Caco-2 (cell line): ENCODE measurements at regions of chr1 and their contacts with region 1.

Region 1: DNA sequence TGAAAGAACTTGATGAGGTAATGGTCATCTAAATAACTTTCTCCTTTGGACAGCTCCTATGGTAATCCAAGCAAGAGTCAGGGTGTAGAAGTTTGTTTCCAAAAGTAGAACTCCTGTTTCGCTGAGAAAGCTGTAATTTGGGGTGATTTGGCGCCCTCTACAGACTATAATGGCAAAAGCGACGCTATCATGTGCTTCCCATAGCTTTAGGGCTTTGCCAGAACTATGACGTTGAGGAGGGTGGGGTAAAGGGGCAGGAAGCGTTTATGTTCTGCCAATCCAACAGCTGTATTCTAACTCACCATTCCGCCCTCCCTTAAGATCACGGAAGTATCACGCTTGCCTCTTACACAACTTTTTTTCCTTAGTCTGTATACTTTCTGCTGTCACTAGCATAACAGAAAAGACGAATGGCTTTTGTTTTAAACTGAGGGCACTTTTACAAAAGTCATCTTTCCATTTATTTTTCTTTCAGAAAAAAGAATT is at the start of gene FMO4:
- DNase-seq: peak; percentile 91 to 95
- H3K4me3 ChIP-seq: peak within 1 kb of the TSS; percentile 21
- H3K4me3 Mint-ChIP-seq: peak within 1 kb of the TSS; percentile 67
- H3K27ac Mint-ChIP-seq: peak within 1 kb of the TSS; percentile 74
- H3K4me1 ChIP-seq: peaks cover 9% of the 10 kb centered on the region
- H3K4me1 Mint-ChIP-seq: no peaks in the 10 kb centered on the region
- H3K27me3 ChIP-seq: no peaks in the 10 kb centered on the region
- H3K27me3 Mint-ChIP-seq: no peaks in the 10 kb centered on the region
- CTCF ChIP-seq: peak; percentile 79 to 80
- total RNA-seq, gene FMO4: 2.3 and 3.8 TPM in 2 replicates

Region 2: DNA sequence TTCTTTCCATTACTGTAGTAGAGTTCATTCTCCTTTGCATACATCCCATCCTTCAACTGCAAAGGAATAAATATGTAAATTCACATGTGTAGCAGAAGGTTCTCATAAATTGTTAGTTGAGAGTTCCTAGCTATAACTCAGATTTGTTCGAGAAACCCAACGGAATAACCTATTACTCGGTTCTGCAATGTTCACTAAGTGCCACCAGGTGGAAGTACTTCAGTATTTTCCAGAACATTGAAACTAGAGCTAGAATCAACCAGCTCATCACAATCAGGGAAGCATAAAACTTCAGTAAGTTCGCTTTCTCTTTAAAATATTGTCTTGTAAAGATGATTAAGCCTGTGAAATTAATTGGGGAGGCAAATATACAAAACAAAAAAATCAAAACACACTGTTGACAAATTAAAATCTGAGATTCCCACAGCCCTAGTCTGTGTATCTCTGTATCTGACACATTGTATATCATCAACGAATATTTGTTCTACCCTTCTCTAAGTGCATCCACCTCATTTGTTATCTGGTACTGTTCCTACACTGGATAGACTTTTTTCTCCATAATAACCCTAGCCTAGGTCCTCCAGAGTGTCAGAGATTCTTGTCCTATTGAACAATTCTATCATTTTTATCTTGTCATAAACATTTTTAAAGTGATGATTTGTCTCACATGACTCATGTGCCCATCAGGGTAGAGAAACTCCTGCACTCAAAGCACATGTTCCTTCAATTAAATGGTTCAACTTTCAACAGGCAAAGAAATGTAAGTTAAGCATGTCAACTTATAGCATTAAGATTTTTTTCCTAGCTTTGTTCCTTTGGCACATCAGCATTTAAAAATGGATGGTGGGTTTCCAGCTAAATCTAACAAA is 346.6 kb before region 1 on chr1:
- CTCF ChIA-PET with region 1: interaction called, 46 read pairs
- POLR2A ChIA-PET with region 1: no interaction called
- intact Hi-C with region 1: loop called (anchors 5 kb)
- DNase-seq: peak in 1 of 2 experiments; percentile 25
- H3K4me3 ChIP-seq: no peak overlapping the region
- H3K4me3 Mint-ChIP-seq: no peak overlapping the region
- H3K27ac Mint-ChIP-seq: no peak overlapping the region
- H3K4me1 ChIP-seq: no peaks in the 10 kb centered on the region
- H3K4me1 Mint-ChIP-seq: no peaks in the 10 kb centered on the region
- H3K27me3 ChIP-seq: no peaks in the 10 kb centered on the region
- H3K27me3 Mint-ChIP-seq: no peaks in the 10 kb centered on the region
- CTCF ChIP-seq: peak; percentile 60 to 66

Region 3: DNA sequence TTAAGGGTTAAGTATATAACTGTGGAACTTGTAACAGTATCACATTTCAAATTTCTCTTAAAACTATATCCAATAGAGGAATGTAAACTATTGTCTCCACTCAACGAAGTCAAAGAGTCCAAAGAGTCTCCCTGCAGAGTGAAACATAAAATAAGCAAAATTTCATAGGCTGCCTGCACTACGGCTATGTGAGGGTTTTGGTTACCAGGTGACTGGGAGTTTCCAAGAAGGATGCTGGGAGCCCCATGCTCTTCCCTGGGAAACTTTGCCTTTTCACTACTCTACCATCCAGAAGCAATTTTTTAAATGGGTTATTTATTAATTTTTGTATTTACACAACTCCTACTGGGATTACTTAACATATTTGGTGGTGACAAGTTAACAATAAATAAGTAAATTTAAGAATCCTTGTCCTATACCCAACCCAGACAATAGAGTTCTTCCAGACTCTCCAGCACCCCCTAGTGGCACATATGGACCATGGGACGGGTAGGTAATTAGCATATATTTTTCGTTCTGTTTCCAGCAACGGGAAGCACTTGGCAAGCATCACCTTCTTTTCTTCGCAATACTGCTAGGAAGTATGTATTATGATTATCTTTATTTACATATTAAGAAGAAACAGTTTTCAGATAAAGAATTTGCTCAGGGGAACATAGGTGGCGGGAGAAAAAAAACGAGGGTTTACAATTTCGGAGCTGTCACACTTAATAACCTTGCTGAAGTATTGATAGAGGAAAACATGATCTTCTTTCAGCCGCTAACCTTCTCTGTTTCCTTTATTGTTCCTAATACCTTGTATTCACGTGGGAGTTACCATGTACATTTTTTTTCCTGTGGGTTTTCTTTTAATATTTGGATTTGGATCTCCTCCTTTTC is 125.3 kb before region 1 on chr1:
- CTCF ChIA-PET with region 1: no interaction called
- POLR2A ChIA-PET with region 1: no interaction called
- intact Hi-C with region 1: loop called (anchors 1 kb)
- DNase-seq: peak; percentile 57 to 62
- H3K4me3 ChIP-seq: no peak overlapping the region
- H3K4me3 Mint-ChIP-seq: no peak overlapping the region
- H3K27ac Mint-ChIP-seq: no peak overlapping the region
- H3K4me1 ChIP-seq: no peaks in the 10 kb centered on the region
- H3K4me1 Mint-ChIP-seq: no peaks in the 10 kb centered on the region
- H3K27me3 ChIP-seq: no peaks in the 10 kb centered on the region
- H3K27me3 Mint-ChIP-seq: no peaks in the 10 kb centered on the region
- CTCF ChIP-seq: peak; percentile 77 to 79

Region 4: GRCh38 chr1:171245458-171246064 is 68.3 kb before region 1 on chr1:
- CTCF ChIA-PET with region 1: interaction called, 70 read pairs
- POLR2A ChIA-PET with region 1: no interaction called
- intact Hi-C with region 1: loop called (anchors 1 kb)
- DNase-seq: peak; percentile 41 to 61
- H3K4me3 ChIP-seq: no peak overlapping the region
- H3K4me3 Mint-ChIP-seq: no peak overlapping the region
- H3K27ac Mint-ChIP-seq: no peak overlapping the region
- H3K4me1 ChIP-seq: no peaks in the 10 kb centered on the region
- H3K4me1 Mint-ChIP-seq: no peaks in the 10 kb centered on the region
- H3K27me3 ChIP-seq: no peaks in the 10 kb centered on the region
- H3K27me3 Mint-ChIP-seq: no peaks in the 10 kb centered on the region
- CTCF ChIP-seq: peak; percentile 84 to 86

Region 5: GRCh38 chr1:171256940-171257606 is 56.8 kb before region 1 on chr1:
- CTCF ChIA-PET with region 1: interaction called, 19 read pairs
- POLR2A ChIA-PET with region 1: no interaction called
- intact Hi-C with region 1: no loop called
- DNase-seq: peak in 1 of 2 experiments; percentile 29
- H3K4me3 ChIP-seq: no peak overlapping the region
- H3K4me3 Mint-ChIP-seq: no peak overlapping the region
- H3K27ac Mint-ChIP-seq: peak overlapping the region; percentile 46
- H3K4me1 ChIP-seq: peaks cover 31% of the 10 kb centered on the region
- H3K4me1 Mint-ChIP-seq: peaks cover 22% of the 10 kb centered on the region
- H3K27me3 ChIP-seq: no peaks in the 10 kb centered on the region
- H3K27me3 Mint-ChIP-seq: no peaks in the 10 kb centered on the region
- CTCF ChIP-seq: no peak